ENCODE measurements at regions of chr14 and their contacts with region 1.

Region 1: GRCh38 chr14:24013654-24014514 is 25.2 kb downstream of the DHRS4L2 start:
- DNase-seq: peak; percentile 78
- ATAC-seq: peak; percentile 99
- H3K4me3 ChIP-seq: no peak overlapping the region
- H3K27ac ChIP-seq: no peak overlapping the region
- H3K4me1 ChIP-seq: peaks cover 0 to 4% of the 10 kb centered on the region in 2 experiments; a peak in 1 of 4 replicates
- H3K27me3 ChIP-seq: no peaks in the 10 kb centered on the region
- CTCF ChIP-seq: peak; percentile 86 to 90 (median 87)
- POLR2A ChIP-seq: no peak
- RAD21 ChIP-seq: peak; percentile 95

Region 2: GRCh38 chr14:23953464-23954278 is 60.2 kb before region 1 on chr14 and contains the start of gene DHRS4:
- CTCF ChIA-PET with region 1: no interaction called
- POLR2A ChIA-PET with region 1: no interaction called
- RAD21 ChIA-PET with region 1: no interaction called
- intact Hi-C with region 1: loop called (anchors 10 kb)
- DNase-seq: peak; percentile 67
- ATAC-seq: peak; percentile 98
- H3K4me3 ChIP-seq: peak within 1 kb of the TSS; percentile 85 to 87
- H3K27ac ChIP-seq: peak within 1 kb of the TSS; percentile 96
- H3K4me1 ChIP-seq: peaks cover 0 to 9% of the 10 kb centered on the region in 2 experiments; a peak in 2 of 4 replicates
- H3K27me3 ChIP-seq: no peaks in the 10 kb centered on the region
- CTCF ChIP-seq: peak; percentile 63 to 93 (median 92); a peak in 5 of 6 replicates
- POLR2A ChIP-seq: peak; percentile 66
- RAD21 ChIP-seq: peak; percentile 56; the same call in 1 of the 2 replicates
- total RNA-seq, gene DHRS4: 21.8 TPM

Region 3: DNA sequence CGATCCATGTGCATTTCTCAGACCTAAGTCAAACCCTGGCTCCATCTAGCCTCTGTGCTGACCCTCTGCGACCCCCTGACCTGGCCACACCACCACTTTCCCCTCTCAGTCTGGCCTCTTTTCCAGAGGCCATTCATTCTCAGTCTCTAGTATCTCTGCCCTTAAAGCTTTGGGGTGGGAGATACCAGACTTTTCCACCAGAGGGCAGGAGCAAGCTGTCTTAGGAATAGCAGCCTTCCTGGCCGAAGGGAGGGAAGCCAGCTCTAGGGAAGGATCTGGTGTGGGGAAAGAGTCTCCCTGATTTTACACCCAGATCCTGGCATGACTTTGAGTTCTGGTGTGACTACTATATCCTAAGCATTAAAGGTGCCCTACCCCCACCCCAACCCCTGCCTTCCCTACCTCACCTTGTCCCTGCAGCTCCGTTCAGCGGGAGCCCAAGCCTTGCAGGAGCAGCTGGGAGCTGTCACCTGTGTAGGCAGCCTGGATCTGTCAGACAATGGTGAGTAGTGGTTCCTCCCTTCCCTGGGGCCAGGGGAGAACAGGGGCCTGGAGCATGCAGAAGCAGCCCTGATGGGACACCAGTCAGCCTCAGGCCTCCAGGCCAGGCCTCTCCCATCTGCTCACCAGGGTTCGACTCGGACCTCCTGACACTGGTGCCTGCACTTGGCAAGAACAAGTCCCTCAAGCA is 44.5 kb after region 1 on chr14:
- CTCF ChIA-PET with region 1: no interaction called
- POLR2A ChIA-PET with region 1: no interaction called
- RAD21 ChIA-PET with region 1: no interaction called
- intact Hi-C with region 1: loop called (anchors 2 kb)
- DNase-seq: no peak
- ATAC-seq: peak; percentile 92
- H3K4me3 ChIP-seq: no peak overlapping the region
- H3K27ac ChIP-seq: no peak overlapping the region
- H3K4me1 ChIP-seq: peaks cover 0 to 3% of the 10 kb centered on the region in 2 experiments; a peak in 1 of 4 replicates
- H3K27me3 ChIP-seq: no peaks in the 10 kb centered on the region
- CTCF ChIP-seq: peak; percentile 72 to 89 (median 87); a peak in 5 of 6 replicates
- POLR2A ChIP-seq: no peak
- RAD21 ChIP-seq: peak; percentile 95

Measured in HCT116 (cell line).